ENCODE measurements at regions of chr2 and their contacts with region 1.

Region 1: DNA sequence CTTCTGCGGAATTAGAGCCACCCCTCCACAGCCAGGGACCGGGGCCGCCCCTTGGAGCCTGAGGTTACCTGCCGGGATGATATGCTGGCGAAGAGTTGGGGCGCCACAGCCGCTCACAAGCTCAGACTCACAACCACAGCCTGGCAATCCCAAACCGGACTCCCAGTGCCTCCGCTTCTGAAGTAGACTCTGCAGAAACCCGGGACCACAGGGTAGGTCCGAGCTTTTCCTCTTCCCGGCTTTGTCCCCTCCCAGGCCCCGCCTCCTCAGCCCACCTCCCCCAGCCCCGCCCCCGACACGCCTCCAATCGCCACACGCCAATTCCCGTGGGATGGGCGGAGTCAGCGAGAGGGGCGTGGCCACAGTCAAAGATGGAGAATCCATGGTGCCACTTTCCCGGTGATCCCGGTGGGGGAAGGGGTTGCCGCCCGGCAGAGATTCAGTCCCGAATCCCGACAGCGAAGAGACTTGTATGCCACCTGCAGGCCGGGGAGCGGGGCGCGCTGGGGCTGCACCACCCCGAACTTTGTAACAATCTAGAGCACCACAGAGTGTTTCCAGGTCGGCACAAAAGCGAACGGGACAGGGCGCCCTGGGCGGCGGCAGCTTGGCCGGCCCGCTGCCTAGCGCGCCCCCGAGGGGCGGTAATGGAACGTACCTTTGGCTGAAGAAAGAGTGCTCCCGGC is at the start of gene IDH1:
- DNase-seq: peak; percentile 97
- H3K4me3 Mint-ChIP-seq: peak within 1 kb of the TSS; percentile 87
- H3K27ac Mint-ChIP-seq: peak within 1 kb of the TSS; percentile 65
- H3K4me1 Mint-ChIP-seq: peaks cover 32% of the 10 kb centered on the region
- H3K27me3 Mint-ChIP-seq: peaks cover 11% of the 10 kb centered on the region

Region 2: GRCh38 chr2:208101716-208102631 is 153.0 kb before region 1 on chr2:
- CTCF ChIA-PET with region 1: interaction called, 22 read pairs
- DNase-seq: no peak
- H3K4me3 Mint-ChIP-seq: no peak overlapping the region
- H3K27ac Mint-ChIP-seq: no peak overlapping the region
- H3K4me1 Mint-ChIP-seq: peaks cover 18% of the 10 kb centered on the region
- H3K27me3 Mint-ChIP-seq: peaks cover 27% of the 10 kb centered on the region

Region 3: DNA sequence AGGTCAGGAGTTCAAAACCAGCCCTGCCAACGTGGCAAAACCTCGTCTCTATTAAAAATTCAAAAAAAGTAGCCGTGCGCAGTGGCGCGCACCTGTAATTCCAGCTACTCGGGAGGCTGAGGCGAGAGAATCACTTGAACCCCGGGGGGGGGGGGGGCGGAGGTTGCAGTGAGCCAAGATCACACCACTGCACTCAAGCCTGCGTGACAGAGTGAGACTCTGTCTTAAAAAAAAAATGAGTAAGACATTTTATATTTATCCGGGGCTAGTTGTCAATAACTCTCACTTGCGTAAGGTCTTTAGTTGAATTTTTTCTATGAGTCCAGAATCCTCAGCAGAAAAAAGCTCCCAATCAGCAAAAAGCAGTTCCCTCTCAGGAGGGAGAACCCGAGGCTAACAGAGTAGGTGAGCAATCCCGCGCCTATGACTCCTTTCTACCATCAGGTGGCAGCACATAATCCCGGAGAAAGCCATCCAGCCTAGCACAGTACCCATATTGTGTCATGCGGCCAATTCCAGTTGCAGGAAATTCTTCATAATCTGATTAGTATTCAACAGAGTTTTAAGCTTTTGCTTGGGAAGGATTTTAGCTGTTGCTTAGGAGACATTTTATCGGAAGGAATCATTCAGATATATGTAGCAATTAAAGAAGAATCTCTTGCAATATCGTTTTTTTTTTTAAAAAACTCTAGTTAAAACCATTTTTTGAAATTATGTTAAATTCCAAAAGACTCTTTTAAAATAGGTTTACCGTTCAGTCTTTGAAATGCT is 79.8 kb before region 1 on chr2:
- CTCF ChIA-PET with region 1: interaction called, 26 read pairs
- DNase-seq: peak; percentile 70
- H3K4me3 Mint-ChIP-seq: no peak overlapping the region
- H3K27ac Mint-ChIP-seq: no peak overlapping the region
- H3K4me1 Mint-ChIP-seq: no peaks in the 10 kb centered on the region
- H3K27me3 Mint-ChIP-seq: peaks cover 15% of the 10 kb centered on the region

Region 4: GRCh38 chr2:208234786-208235185 is 20.2 kb before region 1 on chr2:
- CTCF ChIA-PET with region 1: no interaction called
- DNase-seq: no peak
- H3K4me3 Mint-ChIP-seq: no peak overlapping the region
- H3K27ac Mint-ChIP-seq: no peak overlapping the region
- H3K4me1 Mint-ChIP-seq: no peaks in the 10 kb centered on the region
- H3K27me3 Mint-ChIP-seq: no peaks in the 10 kb centered on the region

Region 5: GRCh38 chr2:208265801-208266552 is 11.0 kb after region 1 on chr2 and contains the start of gene PIKFYVE:
- CTCF ChIA-PET with region 1: interaction called, 16 read pairs
- DNase-seq: peak; percentile 94
- H3K4me3 Mint-ChIP-seq: peak within 1 kb of the TSS; percentile 93
- H3K27ac Mint-ChIP-seq: peak within 1 kb of the TSS; percentile 94
- H3K4me1 Mint-ChIP-seq: peaks cover 52% of the 10 kb centered on the region
- H3K27me3 Mint-ChIP-seq: peaks cover 3% of the 10 kb centered on the region

Measured in activated naive CD4-positive, alpha-beta T cell treated with anti-CD3 and anti-CD28 coated beads, Interleukin-2, amount 10 ng/mL, durations not matched to agents 7 days and 5 days (primary cell).